ENCODE measurements at regions of chr1 and their contacts with region 1.

Region 1: DNA sequence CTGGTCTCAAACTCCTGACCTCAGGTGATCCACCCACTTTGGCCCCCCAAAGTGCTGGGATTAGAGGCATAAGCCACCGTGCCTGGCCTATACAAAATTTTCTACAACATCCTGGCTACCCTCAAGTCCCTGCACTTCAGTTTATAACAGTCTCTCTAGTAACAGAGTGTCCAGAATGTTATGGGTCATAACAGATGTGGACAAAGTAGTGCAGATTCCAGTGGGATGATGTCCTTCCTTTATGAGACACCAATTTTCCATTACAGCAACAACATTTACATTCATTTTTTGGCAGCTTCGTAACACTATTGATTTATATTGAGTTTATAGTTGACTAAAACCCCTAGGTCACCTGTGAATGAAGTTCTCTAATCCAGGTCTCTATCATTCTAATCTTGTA is 429.4 kb upstream of the PTBP2 start:
- DNase-seq: no peak
- ATAC-seq: no peak
- H3K4me3 ChIP-seq: no peak overlapping the region
- H3K27ac ChIP-seq: no peak overlapping the region
- H3K4me1 ChIP-seq: no peaks in the 10 kb centered on the region
- H3K27me3 ChIP-seq: no peaks in the 10 kb centered on the region
- CTCF ChIP-seq: no peak

Region 2: GRCh38 chr1:96340686-96341085 is 48.5 kb after region 1 on chr1:
- intact Hi-C with region 1: loop called in 1 of 2 experiments (anchors 1 kb)
- DNase-seq: no peak
- ATAC-seq: no peak
- H3K4me3 ChIP-seq: no peak overlapping the region
- H3K27ac ChIP-seq: no peak overlapping the region
- H3K4me1 ChIP-seq: no peaks in the 10 kb centered on the region
- H3K27me3 ChIP-seq: no peaks in the 10 kb centered on the region
- CTCF ChIP-seq: no peak

Measured in psoas muscle (tissue), 8 donors.